H1 (cell line): ENCODE measurements at regions of chr3 and their contacts with region 1.

Region 1: DNA sequence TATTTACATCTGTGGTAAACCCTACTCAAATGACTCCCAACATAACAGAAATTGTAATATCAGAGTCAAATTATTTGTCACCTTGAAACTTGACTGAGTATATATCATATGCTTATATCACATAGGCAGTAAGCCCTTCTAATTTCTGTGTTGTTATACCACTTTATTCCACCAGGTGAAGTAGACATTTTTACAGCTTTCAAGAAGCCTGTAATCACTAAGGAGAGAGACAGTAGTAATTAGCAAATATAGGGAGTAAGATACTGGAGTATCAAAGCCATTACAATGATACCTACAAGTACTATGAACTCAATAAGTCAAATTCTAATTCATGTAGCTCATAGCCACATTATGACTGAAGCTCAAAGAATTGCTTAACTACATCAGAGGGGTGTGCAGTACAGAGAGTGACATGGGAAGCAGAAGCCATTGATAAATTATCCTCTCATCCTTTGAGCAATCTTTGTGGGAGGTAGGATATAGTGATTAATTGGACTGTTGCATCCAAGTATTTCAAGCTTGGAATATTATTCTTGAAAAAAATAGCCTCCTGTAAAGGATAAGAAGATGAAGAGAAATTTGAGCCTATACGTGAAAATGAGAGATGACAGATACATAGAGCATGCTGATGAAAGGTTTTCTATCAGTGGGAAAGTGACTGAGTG is 1005.9 kb downstream of the ZPLD1 start:
- DNase-seq: no peak
- H3K4me3 ChIP-seq: no peak overlapping the region
- H3K27ac ChIP-seq: no peak overlapping the region
- H3K4me1 ChIP-seq: no peaks in the 10 kb centered on the region
- H3K27me3 ChIP-seq: no peaks in the 10 kb centered on the region
- CTCF ChIP-seq: no peak; a peak in 1 of 4 replicates
- EP300 ChIP-seq: no peak
- POLR2A ChIP-seq: no peak
- RAD21 ChIP-seq: peak in 1 of 2 experiments; percentile 33; a peak in 3 of 4 replicates

Region 2: GRCh38 chr3:103453152-103453551 is 12.5 kb after region 1 on chr3:
- CTCF ChIA-PET with region 1: interaction called, 17 read pairs
- POLR2A ChIA-PET with region 1: no interaction called
- DNase-seq: no peak
- H3K4me3 ChIP-seq: no peak overlapping the region
- H3K27ac ChIP-seq: no peak overlapping the region
- H3K4me1 ChIP-seq: no peaks in the 10 kb centered on the region
- H3K27me3 ChIP-seq: no peaks in the 10 kb centered on the region
- CTCF ChIP-seq: no peak
- EP300 ChIP-seq: no peak
- POLR2A ChIP-seq: no peak
- RAD21 ChIP-seq: no peak

Region 3: GRCh38 chr3:103614719-103615118 is 174.0 kb after region 1 on chr3:
- CTCF ChIA-PET with region 1: no interaction called
- POLR2A ChIA-PET with region 1: no interaction called
- DNase-seq: no peak
- H3K4me3 ChIP-seq: no peak overlapping the region
- H3K27ac ChIP-seq: no peak overlapping the region
- H3K4me1 ChIP-seq: no peaks in the 10 kb centered on the region
- H3K27me3 ChIP-seq: no peaks in the 10 kb centered on the region
- CTCF ChIP-seq: no peak
- EP300 ChIP-seq: no peak
- POLR2A ChIP-seq: no peak
- RAD21 ChIP-seq: no peak